ENCODE measurements at regions of chr7 and their contacts with region 1.

Region 1: GRCh38 chr7:50092579-50093491 is at the start of gene ZPBP:
- DNase-seq: peak; percentile 43
- H3K4me3 Mint-ChIP-seq: peak within 1 kb of the TSS; percentile 81
- H3K27ac Mint-ChIP-seq: peak within 1 kb of the TSS; percentile 68
- H3K4me1 Mint-ChIP-seq: peaks cover 4% of the 10 kb centered on the region
- H3K27me3 Mint-ChIP-seq: peaks cover 9% of the 10 kb centered on the region
- total RNA-seq, gene ZPBP: not detected in 2 replicates

Region 2: DNA sequence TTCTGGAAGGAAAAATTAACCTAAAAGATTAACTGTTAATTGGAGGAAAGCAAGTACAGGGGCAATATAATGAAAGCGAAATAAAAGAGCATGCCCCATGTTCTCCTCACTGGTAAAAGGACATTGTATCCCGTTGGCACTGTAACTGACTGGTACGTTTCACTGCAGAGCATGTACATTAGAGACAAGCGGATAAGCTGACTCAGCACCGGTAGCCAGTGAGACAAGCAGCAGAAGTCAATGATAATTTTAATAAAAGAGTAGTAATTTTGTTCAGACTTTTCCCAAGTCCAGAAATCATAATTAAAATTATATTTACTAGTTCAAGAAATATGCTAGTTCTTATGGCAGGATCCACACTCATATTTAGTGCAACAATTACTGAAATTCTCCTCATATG is 480.9 kb before region 1 on chr7:
- intact Hi-C with region 1: no loop called
- DNase-seq: no peak
- H3K4me3 Mint-ChIP-seq: no peak overlapping the region
- H3K27ac Mint-ChIP-seq: no peak overlapping the region
- H3K4me1 Mint-ChIP-seq: no peaks in the 10 kb centered on the region
- H3K27me3 Mint-ChIP-seq: no peaks in the 10 kb centered on the region

Region 3: GRCh38 chr7:50142425-50143017 is 49.7 kb after region 1 on chr7:
- intact Hi-C with region 1: loop called (anchors 2 kb)
- DNase-seq: no peak
- H3K4me3 Mint-ChIP-seq: peak overlapping the region; percentile 27
- H3K27ac Mint-ChIP-seq: peak overlapping the region; percentile 2
- H3K4me1 Mint-ChIP-seq: peaks cover 34% of the 10 kb centered on the region
- H3K27me3 Mint-ChIP-seq: peaks cover 11% of the 10 kb centered on the region

Region 4: GRCh38 chr7:50369143-50370026 is 276.6 kb after region 1 on chr7:
- intact Hi-C with region 1: loop called (anchors 2 kb)
- DNase-seq: no peak
- H3K4me3 Mint-ChIP-seq: peak overlapping the region; percentile 45
- H3K27ac Mint-ChIP-seq: peak overlapping the region; percentile 85
- H3K4me1 Mint-ChIP-seq: peaks cover 100% of the 10 kb centered on the region
- H3K27me3 Mint-ChIP-seq: no peaks in the 10 kb centered on the region

Region 5: GRCh38 chr7:50467817-50468610 is 375.2 kb after region 1 on chr7:
- intact Hi-C with region 1: loop called (anchors 1 kb)
- DNase-seq: peak; percentile 69
- H3K4me3 Mint-ChIP-seq: no peak overlapping the region
- H3K27ac Mint-ChIP-seq: no peak overlapping the region
- H3K4me1 Mint-ChIP-seq: peaks cover 12% of the 10 kb centered on the region
- H3K27me3 Mint-ChIP-seq: peaks cover 12% of the 10 kb centered on the region

Region 6: DNA sequence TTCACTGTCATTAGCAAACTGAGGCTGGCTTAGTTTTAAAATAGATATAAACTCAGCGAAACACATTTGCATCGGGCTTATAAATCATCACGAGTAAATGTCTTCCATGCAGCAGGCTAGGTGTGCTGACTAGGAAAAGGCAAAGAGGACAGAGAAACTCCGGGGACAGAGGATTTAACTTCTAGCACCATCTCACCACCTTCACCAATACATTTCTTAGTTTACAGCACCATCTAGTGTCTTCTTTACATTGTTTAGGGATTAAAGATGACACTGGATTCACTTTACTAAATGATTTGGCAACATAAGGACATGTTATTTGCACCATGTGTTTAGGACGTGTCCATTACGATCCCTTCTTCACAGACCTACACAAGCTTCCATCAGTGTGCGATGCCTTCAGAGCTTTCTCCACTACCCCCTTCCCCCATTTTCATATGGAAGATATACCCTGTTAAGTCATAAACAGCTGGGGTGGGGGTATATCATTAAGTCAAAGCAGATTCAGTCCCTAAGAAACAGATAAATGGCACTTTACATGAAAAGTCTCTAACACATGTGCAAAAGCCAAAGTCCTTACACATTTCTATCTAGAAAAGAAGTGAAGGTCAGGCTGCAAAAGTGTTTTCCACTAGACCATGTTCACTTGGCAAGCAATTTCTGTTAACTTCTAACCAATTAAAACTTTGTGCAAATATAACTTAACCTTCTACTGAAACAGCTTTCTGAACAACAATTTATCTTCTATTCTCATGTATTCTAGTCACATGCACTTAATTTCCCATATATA is 586.6 kb after region 1 on chr7:
- intact Hi-C with region 1: loop called (anchors 1 kb)
- DNase-seq: no peak
- H3K4me3 Mint-ChIP-seq: no peak overlapping the region
- H3K27ac Mint-ChIP-seq: no peak overlapping the region
- H3K4me1 Mint-ChIP-seq: no peaks in the 10 kb centered on the region
- H3K27me3 Mint-ChIP-seq: peaks cover 11% of the 10 kb centered on the region

Region 7: DNA sequence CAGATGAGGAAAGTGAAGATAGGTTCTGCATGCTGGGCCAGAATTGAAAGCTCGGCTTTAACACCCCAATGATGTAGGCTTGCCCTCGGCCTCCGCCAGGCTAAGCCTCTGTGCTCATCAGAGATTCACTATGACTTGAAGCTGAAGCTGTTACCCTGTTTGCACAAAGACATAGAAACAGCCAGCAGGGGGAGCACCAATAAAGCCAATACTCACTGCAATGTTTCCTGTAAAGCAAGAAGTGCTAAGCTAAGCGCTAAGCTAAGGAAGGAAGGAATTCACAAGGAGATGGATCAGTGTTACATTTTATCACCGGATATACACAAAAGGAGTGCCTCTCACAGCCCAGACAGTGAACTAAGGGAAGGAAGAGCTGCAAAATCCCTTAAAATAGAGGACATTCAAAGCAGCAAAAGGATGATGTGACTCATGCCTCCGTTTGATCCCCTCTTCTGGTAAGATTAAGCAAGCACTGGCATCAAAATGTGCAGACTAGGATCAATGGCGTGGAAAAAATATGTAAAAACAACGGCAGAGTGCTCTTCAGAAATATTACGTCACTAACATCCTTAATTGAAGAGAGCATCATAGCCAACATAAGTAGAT is 1070.0 kb after region 1 on chr7:
- intact Hi-C with region 1: loop called (anchors 1 kb)
- DNase-seq: peak; percentile 62
- H3K4me3 Mint-ChIP-seq: no peak overlapping the region
- H3K27ac Mint-ChIP-seq: no peak overlapping the region
- H3K4me1 Mint-ChIP-seq: peaks cover 15% of the 10 kb centered on the region
- H3K27me3 Mint-ChIP-seq: peaks cover 21% of the 10 kb centered on the region